Activated B cell treated with CpG ODN at 0.5 μM for 24 hours (primary cell): ENCODE measurements at regions of chr16 and their contacts with region 1.

Region 1: GRCh38 chr16:67159593-67160406 is at the starts of genes FBXL8 and TRADD:
- DNase-seq: peak; percentile 84
- ATAC-seq: peak; percentile 65
- H3K4me3 Mint-ChIP-seq: peak within 1 kb of the TSS; percentile 94
- H3K27ac Mint-ChIP-seq: peak within 1 kb of the TSS; percentile 94
- H3K4me1 Mint-ChIP-seq: peaks cover 60% of the 10 kb centered on the region
- H3K27me3 Mint-ChIP-seq: peaks cover 18% of the 10 kb centered on the region
- CTCF ChIP-seq: no peak
- total RNA-seq, gene FBXL8: 5.6 and 6.5 TPM in 2 replicates
- total RNA-seq, gene TRADD: 31.5 and 37.3 TPM in 2 replicates

Region 2: GRCh38 chr16:66947302-66948065 is 212.3 kb before region 1 on chr16:
- CTCF ChIA-PET with region 1: interaction called, 5 read pairs
- POLR2A ChIA-PET with region 1: no interaction called
- intact Hi-C with region 1: loop called (anchors 1 kb)
- DNase-seq: peak; percentile 61
- ATAC-seq: peak; percentile 93
- H3K4me3 Mint-ChIP-seq: peak overlapping the region; percentile 79
- H3K27ac Mint-ChIP-seq: peak overlapping the region; percentile 24
- H3K4me1 Mint-ChIP-seq: peaks cover 17% of the 10 kb centered on the region
- H3K27me3 Mint-ChIP-seq: peaks cover 21% of the 10 kb centered on the region
- CTCF ChIP-seq: peak; percentile 18

Region 3: GRCh38 chr16:67006930-67007658 is 152.7 kb before region 1 on chr16:
- CTCF ChIA-PET with region 1: no interaction called
- POLR2A ChIA-PET with region 1: no interaction called
- intact Hi-C with region 1: no loop called
- DNase-seq: no peak
- ATAC-seq: no peak
- H3K4me3 Mint-ChIP-seq: no peak overlapping the region
- H3K27ac Mint-ChIP-seq: no peak overlapping the region
- H3K4me1 Mint-ChIP-seq: no peaks in the 10 kb centered on the region
- H3K27me3 Mint-ChIP-seq: no peaks in the 10 kb centered on the region
- CTCF ChIP-seq: no peak

Region 4: GRCh38 chr16:67017810-67018488 is 141.9 kb before region 1 on chr16:
- CTCF ChIA-PET with region 1: interaction called, 32 read pairs
- POLR2A ChIA-PET with region 1: interaction called, 6 read pairs
- intact Hi-C with region 1: loop called (anchors 1 kb)
- DNase-seq: peak; percentile 41
- ATAC-seq: peak; percentile 80
- H3K4me3 Mint-ChIP-seq: no peak overlapping the region
- H3K27ac Mint-ChIP-seq: no peak overlapping the region
- H3K4me1 Mint-ChIP-seq: peaks cover 4% of the 10 kb centered on the region
- H3K27me3 Mint-ChIP-seq: no peaks in the 10 kb centered on the region
- CTCF ChIP-seq: no peak

Region 5: DNA sequence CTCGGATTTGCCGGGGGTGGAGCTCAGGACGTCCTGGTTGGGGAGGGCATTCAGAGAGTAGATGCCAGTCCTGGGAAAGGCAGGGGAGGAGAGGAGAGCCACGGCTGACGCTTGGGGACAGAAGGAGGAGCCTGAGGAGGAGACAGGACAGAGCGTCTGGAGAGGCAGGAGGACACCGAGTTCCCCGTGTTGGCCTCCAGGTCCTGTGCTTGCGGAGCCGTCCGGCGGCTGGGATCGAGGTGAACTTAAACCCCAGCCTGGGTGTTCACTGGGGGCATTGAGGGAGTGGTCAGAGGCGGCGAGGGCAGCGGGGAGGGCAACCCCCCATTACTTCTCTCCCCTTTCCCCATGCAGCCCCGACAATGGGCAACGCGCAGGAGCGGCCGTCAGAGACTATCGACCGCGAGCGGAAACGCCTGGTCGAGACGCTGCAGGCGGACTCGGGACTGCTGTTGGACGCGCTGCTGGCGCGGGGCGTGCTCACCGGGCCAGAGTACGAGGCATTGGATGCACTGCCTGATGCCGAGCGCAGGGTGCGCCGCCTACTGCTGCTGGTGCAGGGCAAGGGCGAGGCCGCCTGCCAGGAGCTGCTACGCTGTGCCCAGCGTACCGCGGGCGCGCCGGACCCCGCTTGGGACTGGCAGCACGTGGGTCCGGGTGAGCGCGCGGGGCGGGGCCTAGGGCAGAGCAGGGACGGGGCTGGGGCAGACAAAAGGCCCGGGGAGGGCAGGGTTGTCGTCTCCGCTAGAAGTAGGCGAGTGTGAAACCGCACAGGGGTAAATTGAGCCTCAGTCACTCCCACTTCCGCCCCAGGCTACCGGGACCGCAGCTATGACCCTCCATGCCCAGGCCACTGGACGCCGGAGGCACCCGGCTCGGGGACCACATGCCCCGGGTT is 14.3 kb after region 1 on chr16:
- CTCF ChIA-PET with region 1: interaction called, 9 read pairs
- POLR2A ChIA-PET with region 1: interaction called, 4 read pairs
- intact Hi-C with region 1: loop called (anchors 1 kb)
- DNase-seq: peak; percentile 56
- ATAC-seq: peak; percentile 72
- H3K4me3 Mint-ChIP-seq: peak overlapping the region; percentile 71
- H3K27ac Mint-ChIP-seq: no peak overlapping the region
- H3K4me1 Mint-ChIP-seq: peaks cover 28% of the 10 kb centered on the region
- H3K27me3 Mint-ChIP-seq: peaks cover 59% of the 10 kb centered on the region
- CTCF ChIP-seq: no peak

Region 6: DNA sequence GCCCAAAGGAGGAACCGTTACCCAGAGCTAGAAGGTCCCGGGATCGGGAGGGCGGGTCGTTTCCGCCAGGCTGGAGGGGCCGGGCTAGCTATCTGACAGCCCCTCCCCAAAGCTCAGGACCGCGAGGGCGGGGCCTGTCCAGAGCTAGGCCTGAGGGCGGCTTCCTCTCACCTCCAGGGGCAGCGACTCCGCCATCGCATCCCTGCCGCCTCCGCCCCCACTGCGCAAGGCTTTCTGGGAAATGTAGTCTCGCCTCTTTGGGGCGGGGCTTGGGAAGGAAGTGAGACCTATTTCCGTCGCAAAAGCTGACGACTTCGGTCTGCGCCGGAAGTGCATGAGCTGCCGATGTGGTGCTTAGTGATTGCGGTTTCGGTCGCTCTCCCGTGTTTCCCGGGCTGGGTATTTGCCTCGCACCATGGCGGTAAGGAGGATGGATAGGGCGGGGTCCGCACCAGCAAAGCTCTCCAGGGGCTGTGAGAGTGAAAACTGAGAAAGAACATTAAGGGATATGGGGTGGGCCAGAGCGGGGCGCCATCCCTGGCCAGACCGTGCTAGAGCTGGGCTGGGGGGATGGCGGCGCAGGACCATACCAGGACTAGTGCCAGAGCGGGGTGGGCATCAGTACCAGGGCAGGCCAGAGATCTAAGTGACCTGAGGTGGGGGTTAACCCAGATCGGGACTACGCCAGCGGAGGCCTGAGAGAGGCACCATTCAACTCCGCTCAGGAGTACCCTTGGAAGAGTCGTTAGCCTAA is 67.2 kb after region 1 on chr16 and contains the start of gene TMEM208:
- CTCF ChIA-PET with region 1: interaction called, 4 read pairs
- POLR2A ChIA-PET with region 1: interaction called, 10 read pairs
- intact Hi-C with region 1: loop called (anchors 2 kb)
- DNase-seq: peak; percentile 98
- ATAC-seq: peak; percentile 98
- H3K4me3 Mint-ChIP-seq: peak within 1 kb of the TSS; percentile 100
- H3K27ac Mint-ChIP-seq: peak within 1 kb of the TSS; percentile 99
- H3K4me1 Mint-ChIP-seq: peaks cover 27% of the 10 kb centered on the region
- H3K27me3 Mint-ChIP-seq: no peaks in the 10 kb centered on the region
- CTCF ChIP-seq: no peak
- total RNA-seq, gene TMEM208: 37.1 and 41.3 TPM in 2 replicates

Region 7: GRCh38 chr16:67326472-67327309 is 166.9 kb after region 1 on chr16 and contains the starts of genes KCTD19 and LRRC36:
- CTCF ChIA-PET with region 1: no interaction called
- POLR2A ChIA-PET with region 1: no interaction called
- intact Hi-C with region 1: no loop called
- DNase-seq: peak; percentile 60
- ATAC-seq: peak; percentile 56
- H3K4me3 Mint-ChIP-seq: peak within 1 kb of the TSS; percentile 75
- H3K27ac Mint-ChIP-seq: peak within 1 kb of the TSS; percentile 63
- H3K4me1 Mint-ChIP-seq: peaks cover 28% of the 10 kb centered on the region
- H3K27me3 Mint-ChIP-seq: peaks cover 2% of the 10 kb centered on the region
- CTCF ChIP-seq: no peak
- total RNA-seq, gene KCTD19: not detected in 2 replicates
- total RNA-seq, gene LRRC36: 0.49 and 0.69 TPM in 2 replicates

Region 8: DNA sequence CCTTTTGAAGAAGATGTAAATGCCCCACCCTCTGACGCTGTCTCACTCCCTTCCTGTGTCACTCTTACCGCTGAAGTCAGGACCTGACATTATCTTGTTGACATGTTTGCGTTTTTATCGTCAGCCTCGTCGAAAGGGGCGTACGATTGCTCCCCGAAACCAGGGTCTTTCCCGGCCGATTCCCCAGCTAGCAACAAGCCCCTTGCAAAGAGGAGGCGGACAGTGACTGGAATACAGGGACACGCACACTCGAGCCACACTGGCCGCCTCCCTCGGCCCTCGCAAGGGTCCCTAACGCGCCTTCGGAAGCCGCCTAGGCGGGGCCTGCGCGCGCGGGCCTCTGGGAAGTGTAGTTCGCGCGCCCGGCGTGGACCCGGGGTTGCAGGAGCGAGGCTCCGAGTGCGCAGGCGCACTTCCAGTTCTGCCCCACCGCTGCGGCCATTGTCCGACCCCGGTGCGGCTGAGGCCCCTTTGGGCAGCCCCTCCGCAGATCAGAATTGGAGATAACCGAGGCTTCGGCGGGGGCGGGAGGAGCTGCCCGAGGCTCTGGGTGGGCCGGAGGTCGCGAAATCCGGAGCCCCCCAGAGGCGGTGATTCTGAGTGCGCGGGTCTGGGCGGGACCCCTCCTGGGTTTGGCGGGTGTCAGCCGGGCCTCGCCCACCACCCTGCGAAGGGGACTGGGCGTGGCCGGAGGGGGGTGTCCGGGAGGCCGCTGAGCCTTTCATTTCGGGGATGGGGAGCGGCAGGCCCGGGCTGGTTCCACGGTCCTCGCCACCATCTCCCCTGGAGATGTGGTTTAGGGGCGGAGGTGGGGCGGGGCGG is 1379.3 kb after region 1 on chr16 and contains the start of gene ZFP90:
- CTCF ChIA-PET with region 1: no interaction called
- POLR2A ChIA-PET with region 1: no interaction called
- intact Hi-C with region 1: loop called (anchors 5 kb)
- DNase-seq: peak; percentile 87
- ATAC-seq: peak; percentile 97
- H3K4me3 Mint-ChIP-seq: peak within 1 kb of the TSS; percentile 93
- H3K27ac Mint-ChIP-seq: peak within 1 kb of the TSS; percentile 93
- H3K4me1 Mint-ChIP-seq: peaks cover 14% of the 10 kb centered on the region
- H3K27me3 Mint-ChIP-seq: no peaks in the 10 kb centered on the region
- CTCF ChIP-seq: no peak
- total RNA-seq, gene ZFP90: 18.8 and 25.1 TPM in 2 replicates